ENCODE measurements at regions of chrX and their contacts with region 1.

Region 1: DNA sequence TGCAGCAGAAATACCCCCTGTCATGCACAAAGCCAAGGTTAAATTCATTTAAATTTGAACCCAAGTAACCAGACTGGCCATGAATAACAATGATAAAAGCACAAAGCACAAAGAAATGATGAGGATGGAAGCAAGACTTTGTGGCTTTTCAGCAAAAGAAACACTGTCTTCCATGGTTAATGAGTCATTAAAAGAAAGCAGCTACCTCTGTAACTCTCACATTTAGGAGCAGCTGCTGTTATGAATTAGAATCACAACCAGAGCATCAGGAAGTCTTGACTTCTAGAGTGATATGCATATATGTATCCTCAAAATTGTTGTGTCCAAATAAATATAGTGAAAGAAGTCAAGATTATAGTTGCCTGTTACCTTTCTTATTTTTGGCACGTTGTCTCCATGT is 70.7 kb upstream of the RPS6KA6 start:
- DNase-seq: no peak
- H3K4me3 ChIP-seq: no peak overlapping the region
- H3K27ac ChIP-seq: no peak overlapping the region
- H3K4me1 ChIP-seq: no peaks in the 10 kb centered on the region
- CTCF ChIP-seq: no peak

Region 2: GRCh38 chrX:84322083-84322827 is 63.5 kb after region 1 on chrX:
- CTCF ChIA-PET with region 1: no interaction called
- POLR2A ChIA-PET with region 1: no interaction called
- intact Hi-C with region 1: loop called (anchors 2 kb)
- DNase-seq: no peak
- H3K4me3 ChIP-seq: no peak overlapping the region
- H3K27ac ChIP-seq: no peak overlapping the region
- H3K4me1 ChIP-seq: no peaks in the 10 kb centered on the region
- CTCF ChIP-seq: no peak

Region 3: GRCh38 chrX:84790780-84791179 is 532.1 kb after region 1 on chrX:
- CTCF ChIA-PET with region 1: no interaction called
- POLR2A ChIA-PET with region 1: no interaction called
- intact Hi-C with region 1: no loop called
- DNase-seq: no peak
- H3K4me3 ChIP-seq: no peak overlapping the region
- H3K27ac ChIP-seq: no peak overlapping the region
- H3K4me1 ChIP-seq: no peaks in the 10 kb centered on the region
- CTCF ChIP-seq: no peak